Activated T-helper 1 cell treated with anti-CD3 and anti-CD28 coated beads, Interleukin-12 subunit alpha, Interleukin-12 subunit beta, Interleukin-2, Interleukin-4 antibody, amounts not matched to agents 30 ng/mL and 10 ng/mL and 1 ng/mL, durations not matched to agents 14 hours and 24 hours and 36 hours (primary cell): ENCODE measurements at regions of chr18 and their contacts with region 1.

Region 1: GRCh38 chr18:44679056-44679905 is 1.4 kb upstream of the SETBP1 start:
- DNase-seq: peak; percentile 72
- H3K4me3 Mint-ChIP-seq: peak overlapping the region; percentile 66
- H3K27ac Mint-ChIP-seq: no peak overlapping the region
- H3K4me1 Mint-ChIP-seq: peaks cover 15% of the 10 kb centered on the region
- H3K27me3 Mint-ChIP-seq: peaks cover 28% of the 10 kb centered on the region

Region 2: GRCh38 chr18:44396550-44396949 is 282.7 kb before region 1 on chr18:
- intact Hi-C with region 1: no loop called
- DNase-seq: no peak
- H3K4me3 Mint-ChIP-seq: no peak overlapping the region
- H3K27ac Mint-ChIP-seq: no peak overlapping the region
- H3K4me1 Mint-ChIP-seq: no peaks in the 10 kb centered on the region
- H3K27me3 Mint-ChIP-seq: no peaks in the 10 kb centered on the region

Region 3: DNA sequence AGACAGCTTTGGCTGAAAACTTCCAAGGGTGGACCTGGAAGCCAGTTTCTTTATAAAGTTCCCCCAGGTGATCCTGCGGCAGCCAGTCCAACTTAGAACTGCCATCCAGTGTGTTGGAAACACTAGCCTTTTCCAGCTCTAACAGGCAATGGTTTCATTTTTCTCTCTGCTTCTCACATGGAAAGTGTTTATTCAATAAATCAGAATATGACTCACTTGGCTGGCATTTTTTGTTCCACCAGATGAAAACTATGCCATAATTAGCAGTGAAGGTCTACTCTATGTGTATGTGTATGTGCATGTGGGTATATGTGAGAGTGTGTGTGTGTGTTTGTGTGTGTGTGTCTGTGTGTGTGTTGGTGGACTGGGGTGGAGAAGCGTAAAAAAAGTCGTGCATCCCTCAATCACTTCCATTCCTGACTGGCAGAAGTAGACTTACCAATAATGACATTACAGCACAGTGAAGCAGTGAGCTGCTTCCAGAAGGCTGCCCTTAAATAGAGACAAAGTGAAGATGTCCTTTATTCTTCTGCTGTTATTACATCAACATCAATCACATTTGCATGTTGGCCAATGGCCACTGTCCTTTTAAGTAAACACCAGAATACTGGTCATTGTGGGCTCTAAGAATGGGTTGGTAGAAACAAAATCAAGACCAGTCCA is 89.5 kb before region 1 on chr18:
- intact Hi-C with region 1: loop called (anchors 5 kb)
- DNase-seq: no peak
- H3K4me3 Mint-ChIP-seq: no peak overlapping the region
- H3K27ac Mint-ChIP-seq: no peak overlapping the region
- H3K4me1 Mint-ChIP-seq: no peaks in the 10 kb centered on the region
- H3K27me3 Mint-ChIP-seq: peaks cover 4% of the 10 kb centered on the region

Region 4: DNA sequence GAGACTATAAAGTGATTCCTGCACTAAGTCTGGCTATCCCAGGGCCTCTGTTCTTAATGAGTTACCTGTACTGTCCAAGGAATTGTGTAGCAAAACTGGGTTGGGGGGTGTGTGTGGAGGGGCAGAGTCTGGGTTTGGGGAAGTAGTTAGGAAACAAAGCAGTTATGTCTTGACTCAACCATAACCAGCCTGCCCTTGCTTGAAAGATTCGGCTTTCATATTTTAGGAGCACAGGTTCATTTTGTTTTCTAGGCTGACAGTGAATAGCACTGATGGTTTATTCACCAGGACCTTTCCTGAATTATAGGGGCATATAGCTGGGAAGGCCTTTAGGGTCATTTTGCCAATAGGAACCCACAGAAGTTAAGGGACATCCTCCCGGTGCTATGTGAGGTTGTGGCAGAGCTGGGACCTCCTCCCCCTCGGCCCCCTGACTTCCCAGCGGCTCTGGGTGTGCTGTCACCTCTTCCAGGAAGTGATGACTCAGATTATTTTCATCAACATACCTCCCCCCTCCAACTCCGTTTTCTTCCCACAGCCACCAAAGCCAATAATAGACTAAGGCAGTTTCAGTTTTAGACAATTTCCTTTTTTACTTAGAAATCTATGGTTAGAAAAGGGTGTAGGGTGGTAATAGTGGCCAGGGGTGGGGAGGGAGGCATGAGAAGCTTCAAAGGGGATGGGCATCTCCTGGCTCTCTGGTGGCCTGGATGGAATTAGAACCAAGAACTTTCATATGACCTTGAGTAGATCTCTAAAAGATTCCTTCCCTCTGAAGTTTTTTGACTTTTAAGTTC is 46.2 kb after region 1 on chr18:
- intact Hi-C with region 1: loop called (anchors 1 kb)
- DNase-seq: peak; percentile 72
- H3K4me3 Mint-ChIP-seq: peak overlapping the region; percentile 38
- H3K27ac Mint-ChIP-seq: peak overlapping the region; percentile 88
- H3K4me1 Mint-ChIP-seq: peaks cover 96% of the 10 kb centered on the region
- H3K27me3 Mint-ChIP-seq: no peaks in the 10 kb centered on the region

Region 5: DNA sequence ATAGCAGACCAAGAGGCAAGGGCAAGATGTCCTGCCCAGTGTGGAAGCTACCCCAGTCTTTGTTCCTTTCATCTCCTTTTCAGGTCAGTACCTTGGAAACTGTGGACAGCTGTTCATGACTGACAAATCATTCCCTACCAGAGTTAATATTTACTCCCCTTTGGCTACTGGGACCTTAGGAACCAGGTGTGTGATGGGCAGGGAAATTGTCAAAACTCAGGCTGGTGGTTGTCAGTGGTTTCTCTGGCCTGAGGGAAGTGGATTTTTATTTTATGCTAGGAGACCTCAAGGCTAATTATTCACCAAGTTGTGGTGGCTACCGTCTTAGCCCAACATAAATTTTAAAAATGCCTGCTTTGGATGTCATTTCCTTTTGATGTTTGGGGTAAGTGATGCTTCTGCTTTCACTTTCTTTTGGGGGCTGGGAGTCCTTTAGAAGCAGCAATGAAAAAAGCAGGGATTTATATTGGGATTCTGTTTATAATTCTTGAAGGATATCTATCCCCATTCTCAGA is 120.7 kb after region 1 on chr18:
- intact Hi-C with region 1: loop called (anchors 1 kb)
- DNase-seq: no peak
- H3K4me3 Mint-ChIP-seq: no peak overlapping the region
- H3K27ac Mint-ChIP-seq: peak overlapping the region; percentile 88
- H3K4me1 Mint-ChIP-seq: peaks cover 94% of the 10 kb centered on the region
- H3K27me3 Mint-ChIP-seq: peaks cover 7% of the 10 kb centered on the region

Region 6: DNA sequence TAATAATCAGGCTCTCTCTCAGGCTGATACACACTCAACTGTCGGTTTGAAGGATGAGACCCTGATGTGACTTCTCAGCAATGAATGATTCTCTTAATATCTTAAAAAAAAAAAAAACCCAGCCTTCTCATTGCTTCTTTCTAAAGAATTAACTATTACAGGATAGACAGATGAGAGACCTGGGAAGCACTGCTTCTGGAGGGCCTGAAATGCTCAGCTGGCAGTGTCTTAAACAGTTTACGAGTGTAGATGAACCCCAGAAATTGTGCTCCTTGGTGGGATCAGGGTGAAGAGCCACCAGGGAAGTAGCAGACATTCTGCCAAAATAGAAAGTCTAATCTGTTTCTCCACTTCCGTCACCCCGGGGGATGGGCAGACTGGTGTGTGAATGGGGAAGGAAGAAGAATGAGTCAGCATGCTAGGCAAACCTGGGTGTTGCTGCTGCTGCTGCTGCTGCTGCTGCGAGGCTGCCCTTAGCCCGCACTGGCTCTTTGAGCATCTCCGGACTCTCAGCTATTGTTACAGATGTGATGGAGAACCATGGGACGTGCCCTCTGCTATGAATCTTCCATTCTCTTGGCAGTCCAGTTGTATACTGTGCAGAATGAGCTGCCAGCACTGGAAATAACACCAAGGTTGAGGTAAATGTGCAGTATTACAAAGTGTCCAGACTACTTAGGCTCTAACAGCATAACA is 159.8 kb after region 1 on chr18:
- intact Hi-C with region 1: loop called (anchors 1 kb)
- DNase-seq: peak; percentile 73
- H3K4me3 Mint-ChIP-seq: peak overlapping the region; percentile 40
- H3K27ac Mint-ChIP-seq: peak overlapping the region; percentile 59
- H3K4me1 Mint-ChIP-seq: peaks cover 56% of the 10 kb centered on the region
- H3K27me3 Mint-ChIP-seq: peaks cover 5% of the 10 kb centered on the region

Region 7: GRCh38 chr18:44895176-44895798 is 216.0 kb after region 1 on chr18:
- intact Hi-C with region 1: loop called (anchors 1 kb)
- DNase-seq: peak; percentile 15
- H3K4me3 Mint-ChIP-seq: no peak overlapping the region
- H3K27ac Mint-ChIP-seq: peak overlapping the region; percentile 61
- H3K4me1 Mint-ChIP-seq: peaks cover 61% of the 10 kb centered on the region
- H3K27me3 Mint-ChIP-seq: peaks cover 4% of the 10 kb centered on the region

Region 8: GRCh38 chr18:45212181-45213039 is 533.1 kb after region 1 on chr18:
- intact Hi-C with region 1: loop called (anchors 1 kb)
- DNase-seq: peak; percentile 62
- H3K4me3 Mint-ChIP-seq: no peak overlapping the region
- H3K27ac Mint-ChIP-seq: no peak overlapping the region
- H3K4me1 Mint-ChIP-seq: no peaks in the 10 kb centered on the region
- H3K27me3 Mint-ChIP-seq: peaks cover 7% of the 10 kb centered on the region